ENCODE measurements at regions of chr14 and their contacts with region 1.

Region 1: DNA sequence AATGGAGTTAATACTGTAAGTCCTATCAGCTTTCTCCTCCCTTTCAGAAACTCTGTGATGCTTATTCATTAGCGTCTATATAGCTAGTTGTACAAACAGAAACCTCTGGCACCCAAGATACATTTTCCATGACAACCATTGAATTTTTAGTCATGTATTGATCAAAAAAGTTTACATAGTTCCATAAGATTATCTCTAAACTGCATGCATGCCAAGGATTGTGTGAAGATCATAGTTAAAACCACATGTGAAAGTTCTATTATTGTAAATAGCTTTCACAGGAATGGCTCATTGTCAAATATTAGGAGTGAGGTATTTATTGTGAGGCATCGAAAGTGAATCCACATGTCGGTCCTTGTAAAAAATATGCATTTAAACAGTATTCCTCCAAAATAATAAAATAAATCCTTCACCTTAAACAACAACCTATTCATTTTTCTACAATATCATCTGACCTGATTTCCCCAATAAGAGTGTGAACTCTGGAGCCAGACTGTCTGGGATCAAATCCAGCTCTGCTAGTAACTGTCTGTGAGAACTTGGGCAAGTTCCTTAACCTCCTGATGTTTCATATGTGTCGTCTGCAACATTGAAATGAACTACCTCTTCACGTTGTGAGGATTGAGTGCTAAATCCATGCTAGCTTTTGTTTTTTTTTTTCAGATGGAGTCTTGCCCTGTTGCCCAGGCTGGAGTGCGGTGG is 10.6 kb upstream of the CDKL1 start:
- DNase-seq: no peak
- H3K4me3 ChIP-seq: no peak overlapping the region
- H3K27ac ChIP-seq: no peak overlapping the region
- H3K4me1 ChIP-seq: peaks cover 3% of the 10 kb centered on the region
- H3K27me3 ChIP-seq: no peaks in the 10 kb centered on the region
- CTCF ChIP-seq: no peak

Region 2: DNA sequence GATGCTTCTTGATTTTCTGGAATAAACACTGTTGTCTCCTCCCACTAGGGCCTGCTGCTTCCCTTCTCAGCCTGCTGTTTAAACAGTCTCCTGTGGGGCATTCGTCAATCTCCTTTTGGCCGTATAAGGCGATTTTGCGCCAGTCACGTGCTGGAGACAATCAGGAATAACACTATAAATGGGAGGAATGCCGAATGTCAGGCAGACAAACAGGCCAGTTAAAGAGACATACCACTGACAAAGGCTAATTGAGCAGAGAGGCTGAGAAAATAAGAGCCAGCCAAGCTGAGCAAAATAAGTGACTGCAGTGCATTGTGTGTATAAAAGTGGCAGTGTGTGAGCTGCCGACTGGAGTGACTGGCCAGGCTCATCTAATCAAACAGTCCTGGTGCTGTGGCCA is 71.9 kb before region 1 on chr14:
- CTCF ChIA-PET with region 1: no interaction called
- dilution Hi-C with region 1: loop called (anchors 5 kb)
- in situ Hi-C with region 1: no loop called
- intact Hi-C with region 1: no loop called
- DNase-seq: no peak
- H3K4me3 ChIP-seq: no peak overlapping the region
- H3K27ac ChIP-seq: no peak overlapping the region
- H3K4me1 ChIP-seq: peaks cover 7% of the 10 kb centered on the region
- H3K27me3 ChIP-seq: no peaks in the 10 kb centered on the region
- CTCF ChIP-seq: no peak

Region 3: DNA sequence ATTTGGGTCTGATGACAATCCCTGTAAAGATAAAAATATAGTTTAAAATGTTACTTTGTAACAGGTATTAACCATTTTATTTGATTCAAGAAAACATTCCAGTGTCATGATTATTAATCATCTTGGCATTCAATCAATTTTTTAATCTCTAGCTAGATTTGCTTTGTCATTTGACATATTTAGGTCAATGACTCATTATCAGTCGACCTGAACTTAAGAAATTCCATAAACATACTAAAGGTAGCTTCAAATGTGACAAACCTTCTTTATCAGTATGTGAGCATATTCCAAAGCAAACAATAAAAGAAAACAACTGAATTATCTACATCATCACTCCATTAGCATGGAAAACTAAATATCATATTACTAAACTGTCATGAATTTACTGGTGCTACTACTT is 40.2 kb after region 1 on chr14:
- CTCF ChIA-PET with region 1: no interaction called
- dilution Hi-C with region 1: loop called (anchors 5 kb)
- in situ Hi-C with region 1: no loop called
- intact Hi-C with region 1: no loop called
- DNase-seq: peak; percentile 65
- H3K4me3 ChIP-seq: no peak overlapping the region
- H3K27ac ChIP-seq: peak overlapping the region; percentile 66
- H3K4me1 ChIP-seq: peaks cover 10% of the 10 kb centered on the region
- H3K27me3 ChIP-seq: no peaks in the 10 kb centered on the region
- CTCF ChIP-seq: no peak

Region 4: DNA sequence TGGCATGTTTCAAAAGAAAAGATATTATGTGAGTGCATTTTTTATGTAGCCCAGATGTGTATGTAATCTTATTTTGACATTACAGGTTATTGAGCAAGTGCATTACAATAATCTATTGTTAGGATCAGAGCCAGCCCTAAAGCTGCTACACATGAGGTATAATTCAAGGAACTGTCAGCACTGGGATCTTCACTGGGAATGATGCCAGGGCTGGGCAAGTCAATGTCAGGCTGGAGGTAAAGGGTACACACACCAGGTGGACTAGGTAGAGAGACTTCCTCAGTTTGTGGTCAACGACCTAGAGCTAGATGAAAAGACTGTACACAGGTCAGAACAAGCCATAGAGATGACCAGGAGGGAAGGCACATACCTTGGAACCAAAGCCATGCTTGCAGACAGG is 672.2 kb after region 1 on chr14:
- CTCF ChIA-PET with region 1: no interaction called
- dilution Hi-C with region 1: no loop called
- in situ Hi-C with region 1: no loop called
- intact Hi-C with region 1: no loop called
- DNase-seq: peak; percentile 85
- H3K4me3 ChIP-seq: no peak overlapping the region
- H3K27ac ChIP-seq: peak overlapping the region; percentile 26
- H3K4me1 ChIP-seq: peaks cover 22% of the 10 kb centered on the region
- H3K27me3 ChIP-seq: no peaks in the 10 kb centered on the region
- CTCF ChIP-seq: no peak